ENCODE measurements at regions of chr15 and their contacts with region 1.

Region 1: GRCh38 chr15:32994810-32995424 is 199.6 kb downstream of the FMN1 start:
- DNase-seq: peak; percentile 20
- ATAC-seq: peak; percentile 69; the same call in 1 of the 2 replicates
- H3K4me3 ChIP-seq: no peak overlapping the region
- H3K27ac ChIP-seq: no peak overlapping the region
- H3K4me1 ChIP-seq: no peaks in the 10 kb centered on the region
- H3K27me3 ChIP-seq: peaks cover 4% of the 10 kb centered on the region
- CTCF ChIP-seq: peak; percentile 57; the same call in 1 of the 2 replicates

Region 2: DNA sequence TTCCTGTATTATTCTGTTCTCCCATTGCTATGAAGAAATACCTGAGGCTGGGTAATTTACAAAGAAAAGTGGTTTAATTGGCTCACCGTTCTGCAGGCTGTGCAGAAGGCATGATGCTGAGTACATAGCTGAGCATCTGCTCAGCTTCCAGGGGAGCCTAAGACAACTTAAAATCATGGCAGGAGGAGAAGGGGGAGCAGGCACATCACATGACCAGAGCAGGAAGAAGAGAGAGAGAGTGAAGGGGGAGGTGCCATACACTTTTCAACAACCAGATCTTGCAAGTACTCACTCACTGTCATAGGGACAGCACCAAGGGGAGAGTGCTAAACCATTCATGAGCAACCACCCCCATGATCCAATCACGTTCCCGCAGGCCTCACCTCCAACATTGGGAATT is 776.3 kb before region 1 on chr15:
- CTCF ChIA-PET with region 1: no interaction called
- POLR2A ChIA-PET with region 1: no interaction called
- in situ Hi-C with region 1: no loop called
- intact Hi-C with region 1: no loop called
- DNase-seq: no peak
- ATAC-seq: no peak
- H3K4me3 ChIP-seq: no peak overlapping the region
- H3K27ac ChIP-seq: no peak overlapping the region
- H3K4me1 ChIP-seq: no peaks in the 10 kb centered on the region
- H3K27me3 ChIP-seq: no peaks in the 10 kb centered on the region
- CTCF ChIP-seq: no peak

Region 3: DNA sequence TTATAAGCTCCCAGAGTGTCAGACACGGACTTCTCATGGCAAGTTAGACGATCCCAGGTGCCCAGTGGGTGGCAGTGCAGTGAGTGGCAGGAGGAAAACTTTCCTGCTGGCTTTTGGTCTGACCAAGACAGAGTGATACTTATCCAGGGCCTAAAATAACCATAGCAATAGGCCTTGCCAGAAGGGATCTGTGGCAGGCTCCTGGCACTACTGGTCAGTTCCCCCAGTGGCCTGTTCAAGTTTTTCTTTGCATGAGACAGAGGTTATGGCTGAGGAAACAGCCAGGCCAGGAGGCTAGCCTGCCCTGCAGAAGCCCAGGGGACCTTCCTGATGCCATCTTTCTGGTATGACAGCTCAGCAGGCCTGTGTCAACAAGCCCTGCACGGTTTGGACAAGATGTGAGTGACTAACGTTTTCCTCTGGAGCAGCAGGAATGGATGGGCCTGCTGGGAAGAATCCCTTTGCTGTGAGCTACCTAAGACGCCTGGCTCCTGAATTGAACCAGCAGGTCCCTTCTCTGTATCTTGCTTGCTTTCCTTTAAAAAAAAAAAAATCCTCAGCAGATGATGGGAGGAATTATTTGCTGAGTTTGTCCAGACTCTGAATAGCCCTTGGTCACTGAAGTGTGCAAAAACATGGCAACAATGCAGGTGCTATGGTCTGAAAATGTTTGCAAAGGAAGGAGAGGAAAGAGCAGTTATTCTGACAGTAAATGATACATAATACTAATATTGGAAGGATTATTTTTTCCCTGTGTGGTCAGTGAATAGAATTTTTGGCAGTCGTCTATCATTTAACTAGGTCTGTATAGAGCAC is 335.4 kb before region 1 on chr15:
- CTCF ChIA-PET with region 1: interaction called, 3 read pairs
- POLR2A ChIA-PET with region 1: no interaction called
- in situ Hi-C with region 1: no loop called
- intact Hi-C with region 1: loop called (anchors 5 kb)
- DNase-seq: peak; percentile 51
- ATAC-seq: peak; percentile 84
- H3K4me3 ChIP-seq: no peak overlapping the region
- H3K27ac ChIP-seq: no peak overlapping the region; the same call in 1 of the 2 replicates
- H3K4me1 ChIP-seq: peaks cover 6% of the 10 kb centered on the region; the same call in 1 of the 2 replicates
- H3K27me3 ChIP-seq: no peaks in the 10 kb centered on the region
- CTCF ChIP-seq: peak; percentile 4; the same call in 1 of the 2 replicates

Region 4: DNA sequence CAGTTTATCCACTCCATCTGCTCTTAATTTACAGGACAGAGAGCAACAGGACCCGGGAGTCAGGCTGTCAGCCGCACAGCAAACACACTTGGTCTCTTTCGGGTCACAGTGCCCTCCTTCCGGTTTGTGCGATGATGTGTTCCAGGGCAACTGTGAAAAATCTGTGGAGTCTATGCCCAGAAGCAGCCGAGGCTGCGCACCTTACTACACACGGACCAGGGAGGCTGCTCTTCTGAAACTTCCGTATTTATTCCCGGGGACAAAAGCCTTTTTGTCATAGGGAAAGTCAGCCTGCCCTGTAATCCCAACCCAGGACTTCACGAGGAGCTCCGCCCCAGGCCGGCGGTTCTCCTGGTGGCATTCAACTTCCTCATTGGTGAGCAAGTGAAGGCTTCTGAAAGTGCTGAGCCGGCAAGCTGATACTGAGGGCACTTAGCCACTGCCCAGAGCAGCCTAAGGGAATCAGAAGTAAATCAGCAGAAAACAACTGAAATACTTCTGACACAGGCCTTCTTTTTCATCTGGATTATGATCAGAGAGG is 73.1 kb after region 1 on chr15:
- CTCF ChIA-PET with region 1: no interaction called
- POLR2A ChIA-PET with region 1: no interaction called
- in situ Hi-C with region 1: no loop called
- intact Hi-C with region 1: no loop called
- DNase-seq: no peak
- ATAC-seq: peak; percentile 83
- H3K4me3 ChIP-seq: peak overlapping the region; percentile 13 to 46
- H3K27ac ChIP-seq: peak overlapping the region; percentile 65
- H3K4me1 ChIP-seq: peaks cover 9% of the 10 kb centered on the region; the same call in 1 of the 2 replicates
- H3K27me3 ChIP-seq: no peaks in the 10 kb centered on the region; the same call in 1 of the 2 replicates
- CTCF ChIP-seq: no peak